ACHN (cell line): ENCODE measurements at regions of chr9 and their contacts with region 1.

Region 1: GRCh38 chr9:36357639-36358038 is 42.4 kb downstream of the RNF38 start:
- DNase-seq: no peak

Region 2: DNA sequence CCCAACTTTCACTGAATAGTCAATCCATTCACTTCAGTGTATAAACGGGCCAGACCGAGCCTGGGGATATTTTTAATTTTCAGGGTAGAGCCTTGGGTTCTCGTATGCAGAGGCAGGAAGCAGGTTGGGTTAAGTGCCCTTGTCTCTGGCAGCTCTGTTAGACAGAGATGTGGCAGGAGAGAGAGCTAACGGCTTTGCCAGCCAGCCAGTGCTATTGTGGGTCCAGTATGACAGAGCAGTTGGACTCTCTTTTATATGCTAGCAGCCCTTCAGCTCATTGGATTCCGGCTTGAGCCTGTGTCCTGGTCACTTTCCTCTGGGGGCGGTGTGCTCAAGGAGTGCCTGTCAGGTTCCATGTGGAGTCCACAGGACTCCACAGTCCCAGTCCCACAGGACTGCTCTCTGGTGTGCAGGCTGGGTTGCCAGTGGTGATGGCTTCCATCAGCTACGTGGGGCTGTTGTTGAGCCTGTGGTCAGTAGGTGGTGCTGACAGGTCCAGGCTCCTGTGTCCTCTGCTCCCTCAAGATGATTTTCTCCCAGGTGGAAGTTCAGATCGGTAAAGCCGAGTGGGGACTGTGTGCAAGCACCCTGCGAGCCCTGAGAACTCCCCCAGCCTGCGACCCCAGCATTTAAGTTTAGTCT is 152.6 kb before region 1 on chr9:
- in situ Hi-C with region 1: loop called (anchors 25 kb)
- DNase-seq: peak; percentile 36

Region 3: DNA sequence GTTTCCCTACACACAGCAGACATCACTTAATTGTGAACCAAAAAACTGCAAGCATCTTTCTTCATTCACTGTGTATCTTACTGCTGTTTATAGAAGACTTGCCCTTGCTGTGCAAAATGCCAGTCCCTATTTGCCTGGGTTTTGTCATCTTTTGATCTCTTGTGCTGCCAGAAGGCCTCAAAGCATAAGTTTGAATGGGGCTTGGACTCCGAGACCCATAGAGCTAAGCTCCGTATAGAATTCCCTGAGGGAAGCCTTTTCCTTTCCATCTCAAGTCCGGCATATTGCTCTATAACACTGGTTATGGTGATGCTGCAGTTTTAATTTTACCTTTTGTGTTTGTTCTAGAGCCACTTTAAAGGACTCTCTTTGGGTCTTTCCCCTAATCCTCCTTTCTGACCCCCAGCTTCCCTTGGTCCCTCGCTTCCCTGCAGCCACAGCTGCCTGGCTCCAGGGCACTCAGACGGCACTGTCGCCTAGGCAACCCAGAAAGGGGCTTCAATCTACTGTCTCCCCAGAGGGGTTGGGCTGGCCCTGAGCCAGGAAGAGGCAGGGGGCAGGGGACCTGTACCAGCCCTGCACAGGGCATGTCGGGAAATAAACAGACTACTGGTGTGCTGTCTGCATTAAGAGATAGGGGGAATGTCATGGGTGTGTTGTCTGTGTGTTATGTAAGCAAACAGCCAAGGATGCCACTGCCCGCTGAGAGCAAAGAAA is 141.7 kb after region 1 on chr9:
- in situ Hi-C with region 1: no loop called
- DNase-seq: no peak